Activated CD8-positive, alpha-beta memory T cell treated with anti-CD3 and anti-CD28 coated beads, Interleukin-2, amount 10 ng/mL, durations not matched to agents 7 days and 5 days (primary cell): ENCODE measurements at regions of chr2 and their contacts with region 1.

Region 1: DNA sequence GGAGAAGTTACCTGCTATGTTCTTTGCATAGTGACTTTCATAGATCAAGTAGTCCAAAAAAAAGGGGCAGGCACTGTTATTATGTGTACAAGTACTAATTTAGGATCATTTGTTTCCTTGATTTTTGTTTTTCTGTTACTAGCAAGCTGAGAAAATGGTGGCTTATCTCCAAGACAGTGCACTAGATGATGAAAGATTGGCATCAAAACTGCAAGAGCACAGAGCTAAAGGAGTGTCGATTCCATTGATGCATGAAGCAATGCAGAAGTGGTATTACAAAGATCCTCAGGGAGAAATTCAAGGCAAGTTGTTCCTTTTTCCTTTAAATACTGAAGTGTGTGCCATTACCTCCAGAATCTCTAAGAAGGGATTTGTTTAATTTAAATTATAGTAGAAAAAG is 19.6 kb upstream of the KCNJ13 start:
- DNase-seq: no peak
- ATAC-seq: no peak
- H3K4me3 Mint-ChIP-seq: no peak overlapping the region
- H3K27ac Mint-ChIP-seq: no peak overlapping the region
- H3K4me1 Mint-ChIP-seq: no peaks in the 10 kb centered on the region
- H3K27me3 Mint-ChIP-seq: no peaks in the 10 kb centered on the region

Region 2: GRCh38 chr2:232809349-232810124 is 13.6 kb after region 1 on chr2:
- CTCF ChIA-PET with region 1: interaction called, 11 read pairs
- DNase-seq: no peak
- ATAC-seq: no peak
- H3K4me3 Mint-ChIP-seq: no peak overlapping the region
- H3K27ac Mint-ChIP-seq: no peak overlapping the region
- H3K4me1 Mint-ChIP-seq: peaks cover 7% of the 10 kb centered on the region
- H3K27me3 Mint-ChIP-seq: no peaks in the 10 kb centered on the region